ENCODE measurements at regions of chr2 and their contacts with region 1.

Region 1: GRCh38 chr2:165022781-165023180 is 67.5 kb upstream of the SLC38A11 start:
- DNase-seq: no peak
- H3K4me3 ChIP-seq: no peak overlapping the region
- H3K27ac ChIP-seq: no peak overlapping the region
- H3K4me1 ChIP-seq: no peaks in the 10 kb centered on the region
- H3K27me3 ChIP-seq: no peaks in the 10 kb centered on the region
- CTCF ChIP-seq: no peak
- EP300 ChIP-seq: no peak
- POLR2A ChIP-seq: no peak

Region 2: GRCh38 chr2:164625378-164625971 is 397.3 kb before region 1 on chr2:
- intact Hi-C with region 1: no loop called
- DNase-seq: no peak
- H3K4me3 ChIP-seq: no peak overlapping the region
- H3K27ac ChIP-seq: no peak overlapping the region
- H3K4me1 ChIP-seq: peaks cover 5 to 12% (median 8%) of the 10 kb centered on the region in 4 donors
- H3K27me3 ChIP-seq: peaks cover 0 to 21% (median 7%) of the 10 kb centered on the region in 3 donors
- CTCF ChIP-seq: no peak
- EP300 ChIP-seq: no peak
- POLR2A ChIP-seq: no peak

Region 3: GRCh38 chr2:165182029-165182428 is 159.2 kb after region 1 on chr2:
- intact Hi-C with region 1: loop called (anchors 10 kb)
- DNase-seq: no peak
- H3K4me3 ChIP-seq: no peak overlapping the region
- H3K27ac ChIP-seq: no peak overlapping the region
- H3K4me1 ChIP-seq: no peaks in the 10 kb centered on the region
- H3K27me3 ChIP-seq: no peaks in the 10 kb centered on the region
- CTCF ChIP-seq: no peak
- EP300 ChIP-seq: no peak
- POLR2A ChIP-seq: no peak

Region 4: DNA sequence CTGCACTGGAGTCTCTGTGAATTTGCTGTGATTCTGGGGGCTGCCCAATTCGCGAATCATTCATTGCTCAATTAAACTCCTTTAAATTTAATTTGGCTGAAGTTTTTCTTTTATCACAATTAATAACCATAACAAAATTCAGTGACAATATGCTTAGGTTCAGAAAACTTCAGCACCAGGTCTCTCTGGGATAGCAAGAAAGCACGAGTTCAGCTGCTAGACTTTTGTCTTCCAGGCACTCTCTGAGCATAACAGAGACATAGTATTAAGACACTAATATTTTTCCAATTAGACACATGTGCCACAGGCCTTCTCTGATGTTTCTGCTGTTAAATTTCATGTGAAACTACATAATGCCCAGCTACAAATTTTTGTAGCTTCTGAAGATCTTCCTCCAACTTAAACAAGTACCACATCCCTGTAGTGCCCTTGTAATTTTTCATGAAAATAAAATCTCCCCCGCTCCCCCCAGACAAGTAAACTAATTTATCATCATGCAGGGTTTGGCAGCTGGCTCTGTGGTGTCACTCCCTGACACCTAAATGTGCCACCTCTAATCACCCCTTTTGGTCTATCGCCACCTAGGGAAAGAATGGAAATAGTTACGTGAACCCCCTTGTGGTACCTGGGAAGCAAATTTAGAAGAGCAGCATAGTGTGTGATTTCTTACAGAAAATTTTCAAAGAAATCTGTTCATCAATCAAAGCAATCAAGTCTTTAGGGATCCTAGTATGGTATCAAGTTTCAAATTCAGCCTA is 540.9 kb after region 1 on chr2:
- intact Hi-C with region 1: no loop called
- DNase-seq: no peak
- H3K4me3 ChIP-seq: no peak overlapping the region
- H3K27ac ChIP-seq: no peak overlapping the region
- H3K4me1 ChIP-seq: no peaks in the 10 kb centered on the region
- H3K27me3 ChIP-seq: no peaks in the 10 kb centered on the region
- CTCF ChIP-seq: peak in 1 of 7 experiments; percentile 17
- EP300 ChIP-seq: no peak
- POLR2A ChIP-seq: no peak

Measured in stomach (tissue), 19 donors.